ENCODE measurements at regions of chr12 and their contacts with region 1.

Region 1: GRCh38 chr12:91620422-91620821 is 437.8 kb upstream of the DCN start:
- DNase-seq: no peak
- H3K4me3 ChIP-seq: no peak overlapping the region
- H3K27me3 ChIP-seq: no peaks in the 10 kb centered on the region
- CTCF ChIP-seq: no peak

Region 2: DNA sequence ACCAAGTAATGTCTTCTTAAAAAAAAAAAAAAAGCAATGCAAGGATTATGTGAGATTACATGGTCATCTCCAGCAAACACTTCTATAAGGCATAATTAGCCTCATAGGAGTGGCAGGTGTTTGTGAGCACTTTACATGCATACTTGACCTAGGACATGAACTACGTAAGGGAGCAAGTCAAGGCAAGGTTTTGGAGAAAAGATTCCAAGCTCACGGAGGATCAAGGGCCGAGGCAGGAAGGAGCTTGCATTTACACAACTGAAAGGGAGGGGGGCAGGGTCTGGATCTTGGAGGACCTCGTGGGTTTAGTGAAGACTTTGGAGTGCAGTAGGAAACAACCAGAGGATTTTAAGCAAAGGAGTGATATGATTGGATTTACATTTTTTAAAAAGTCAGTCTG is 777.9 kb before region 1 on chr12:
- CTCF ChIA-PET with region 1: no interaction called
- POLR2A ChIA-PET with region 1: interaction called, 18 read pairs
- DNase-seq: no peak
- H3K4me3 ChIP-seq: no peak overlapping the region
- H3K27me3 ChIP-seq: no peaks in the 10 kb centered on the region
- CTCF ChIP-seq: no peak

Region 3: DNA sequence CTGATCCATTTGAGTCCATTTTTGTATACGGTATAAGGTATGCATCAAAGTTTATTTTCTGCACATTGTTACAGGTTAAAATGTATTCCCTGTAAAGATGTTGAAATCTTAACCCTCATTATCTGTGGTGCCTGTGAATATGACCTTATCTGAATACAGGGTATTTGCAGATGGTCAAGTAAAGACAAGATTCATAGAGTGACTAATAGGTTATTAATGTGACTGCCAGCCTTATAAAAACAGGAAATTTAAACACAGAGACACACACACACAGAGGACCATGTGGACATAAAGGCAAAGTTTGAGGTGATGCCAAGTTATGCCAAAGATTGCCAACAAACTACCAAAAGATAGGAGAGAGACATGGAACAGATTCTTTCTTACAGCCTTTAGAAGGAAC is 90.6 kb before region 1 on chr12:
- CTCF ChIA-PET with region 1: no interaction called
- POLR2A ChIA-PET with region 1: no interaction called
- DNase-seq: no peak
- H3K4me3 ChIP-seq: no peak overlapping the region
- H3K27me3 ChIP-seq: no peaks in the 10 kb centered on the region
- CTCF ChIP-seq: no peak